ENCODE measurements at regions of chr15 and their contacts with region 1.

Region 1: DNA sequence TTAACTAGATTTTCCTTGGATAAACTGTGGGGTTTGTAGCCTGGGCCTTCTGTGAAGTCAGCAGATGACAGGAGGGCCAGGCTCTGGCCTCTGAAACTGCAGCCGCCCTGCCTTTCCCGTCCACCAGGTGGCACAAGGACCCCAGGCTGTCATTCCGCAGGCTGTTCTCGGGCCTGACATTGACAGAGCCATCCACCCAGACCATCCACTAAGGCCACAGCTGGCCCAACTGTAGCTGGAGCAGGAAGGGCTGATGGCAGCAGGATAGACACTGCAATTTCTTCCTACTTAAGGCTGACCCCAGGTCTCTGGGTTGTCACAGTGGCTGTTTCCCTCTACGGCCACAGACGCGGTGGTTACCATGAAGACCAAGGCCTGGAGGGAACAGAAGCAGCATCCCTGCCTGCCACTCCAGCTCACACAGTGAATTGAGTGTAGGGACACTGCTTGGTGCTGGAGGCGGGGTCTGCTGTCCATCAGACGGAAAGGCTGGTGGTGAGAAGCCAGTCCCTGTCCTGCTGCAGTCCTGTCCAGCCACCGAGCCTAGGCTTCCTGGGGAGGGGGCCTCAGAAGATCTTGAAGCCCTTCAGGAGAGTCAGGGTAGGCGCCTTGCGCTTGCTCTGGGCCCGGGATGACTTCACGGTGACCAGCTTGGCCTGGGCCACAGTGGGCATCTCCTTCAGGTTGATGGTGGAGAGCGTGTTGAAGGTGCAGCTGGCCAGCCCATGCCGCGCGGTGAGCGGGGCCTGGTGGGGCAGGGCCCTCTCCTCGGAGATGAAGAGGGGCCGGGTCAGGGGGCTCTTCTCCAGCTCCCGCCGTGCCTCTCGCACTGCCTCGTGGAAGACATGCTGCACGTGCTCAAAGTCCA is 9.4 kb downstream of the SLC51B start:
- DNase-seq: peak; percentile 66
- H3K4me3 Mint-ChIP-seq: no peak overlapping the region
- H3K27ac Mint-ChIP-seq: no peak overlapping the region
- H3K4me1 Mint-ChIP-seq: peaks cover 18% of the 10 kb centered on the region
- H3K27me3 Mint-ChIP-seq: no peaks in the 10 kb centered on the region

Region 2: DNA sequence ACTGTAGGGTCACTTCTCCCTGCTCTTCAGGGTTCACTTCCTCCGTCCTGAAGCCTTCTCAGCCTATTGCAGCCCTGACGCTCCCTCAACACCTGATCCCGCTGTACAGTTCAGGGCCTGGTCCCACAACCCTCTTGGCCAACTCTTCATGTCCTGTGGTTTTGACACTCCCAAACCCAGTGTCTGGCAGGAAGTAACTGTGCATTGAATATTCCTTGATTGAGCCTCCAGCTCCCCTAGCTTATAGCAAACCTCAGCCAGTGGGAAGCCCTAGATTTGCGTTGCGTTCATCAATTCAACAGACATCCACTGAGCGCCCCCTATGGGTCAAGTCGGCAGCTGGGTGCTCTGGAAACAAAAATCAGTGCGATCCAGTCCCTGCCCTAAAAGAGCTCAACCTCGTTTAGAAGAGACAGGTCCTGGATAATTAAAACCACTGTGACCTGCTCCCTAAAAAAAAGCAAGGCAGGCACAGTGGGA is 46.9 kb after region 1 on chr15:
- CTCF ChIA-PET with region 1: interaction called, 18 read pairs
- POLR2A ChIA-PET with region 1: no interaction called
- DNase-seq: peak; percentile 57
- H3K4me3 Mint-ChIP-seq: no peak overlapping the region
- H3K27ac Mint-ChIP-seq: no peak overlapping the region
- H3K4me1 Mint-ChIP-seq: peaks cover 6% of the 10 kb centered on the region
- H3K27me3 Mint-ChIP-seq: no peaks in the 10 kb centered on the region

Region 3: DNA sequence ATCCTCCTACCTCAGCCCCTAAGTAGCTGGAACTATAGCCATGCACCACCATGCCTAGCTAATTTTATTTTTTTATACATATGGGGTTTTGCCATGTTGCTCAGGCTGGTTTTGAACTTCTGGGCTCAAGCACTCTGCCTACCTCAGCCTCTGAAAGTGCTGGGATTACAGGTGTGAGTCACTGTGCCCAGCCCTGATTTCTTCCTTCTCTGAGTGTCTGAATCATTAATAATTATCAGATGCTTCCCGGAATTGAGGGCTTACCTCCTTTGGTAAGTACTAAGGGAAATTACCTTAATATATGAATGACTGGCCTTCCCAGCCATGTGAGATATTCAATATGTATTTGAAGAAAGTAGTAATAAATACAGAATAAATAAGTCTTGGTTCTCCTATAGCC is 123.3 kb after region 1 on chr15:
- CTCF ChIA-PET with region 1: no interaction called
- POLR2A ChIA-PET with region 1: no interaction called
- DNase-seq: no peak
- H3K4me3 Mint-ChIP-seq: no peak overlapping the region
- H3K27ac Mint-ChIP-seq: no peak overlapping the region
- H3K4me1 Mint-ChIP-seq: peaks cover 14% of the 10 kb centered on the region
- H3K27me3 Mint-ChIP-seq: no peaks in the 10 kb centered on the region